Breast epithelium (tissue), 4 donors: ENCODE measurements at regions of chr4 and their contacts with region 1.

Region 1: GRCh38 chr4:56055027-56055977 is 106.6 kb downstream of the CEP135 start:
- DNase-seq: no peak
- H3K4me3 ChIP-seq: no peak overlapping the region
- H3K27ac ChIP-seq: no peak overlapping the region
- H3K4me1 ChIP-seq: no peaks in the 10 kb centered on the region
- H3K27me3 ChIP-seq: peaks cover 0 to 30% of the 10 kb centered on the region in 2 donors
- CTCF ChIP-seq: no peak
- POLR2A ChIP-seq: no peak

Region 2: DNA sequence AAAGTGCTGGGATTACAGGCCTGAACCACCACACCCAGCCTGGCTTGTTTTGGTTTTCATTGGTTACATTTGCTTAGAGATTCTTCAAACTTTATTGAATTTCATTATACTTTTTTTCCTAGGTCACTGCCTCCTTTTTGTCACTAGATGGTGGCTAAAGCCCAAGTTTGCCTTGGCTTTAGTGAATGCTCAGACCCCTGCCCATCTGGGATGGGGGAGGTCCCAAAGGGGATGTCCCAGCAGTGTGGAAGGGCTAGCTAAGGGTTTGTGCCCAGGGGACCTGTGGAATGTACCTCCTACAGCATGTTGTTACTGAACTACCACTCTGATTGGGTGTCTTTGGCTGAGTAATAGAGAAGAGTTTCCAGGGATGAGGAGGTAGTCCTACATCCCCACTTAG is 48.1 kb before region 1 on chr4:
- intact Hi-C with region 1: no loop called
- DNase-seq: no peak
- H3K4me3 ChIP-seq: no peak overlapping the region
- H3K27ac ChIP-seq: no peak overlapping the region
- H3K4me1 ChIP-seq: no peaks in the 10 kb centered on the region
- H3K27me3 ChIP-seq: no peaks in the 10 kb centered on the region
- CTCF ChIP-seq: no peak
- POLR2A ChIP-seq: no peak

Region 3: GRCh38 chr4:56038487-56039148 is 16.7 kb before region 1 on chr4:
- intact Hi-C with region 1: loop called (anchors 2 kb)
- DNase-seq: peak in 1 of 2 donors; percentile 20
- H3K4me3 ChIP-seq: no peak overlapping the region
- H3K27ac ChIP-seq: no peak overlapping the region
- H3K4me1 ChIP-seq: no peaks in the 10 kb centered on the region
- H3K27me3 ChIP-seq: no peaks in the 10 kb centered on the region
- CTCF ChIP-seq: no peak
- POLR2A ChIP-seq: no peak